H1 (cell line): ENCODE measurements at regions of chr7 and their contacts with region 1.

Region 1: DNA sequence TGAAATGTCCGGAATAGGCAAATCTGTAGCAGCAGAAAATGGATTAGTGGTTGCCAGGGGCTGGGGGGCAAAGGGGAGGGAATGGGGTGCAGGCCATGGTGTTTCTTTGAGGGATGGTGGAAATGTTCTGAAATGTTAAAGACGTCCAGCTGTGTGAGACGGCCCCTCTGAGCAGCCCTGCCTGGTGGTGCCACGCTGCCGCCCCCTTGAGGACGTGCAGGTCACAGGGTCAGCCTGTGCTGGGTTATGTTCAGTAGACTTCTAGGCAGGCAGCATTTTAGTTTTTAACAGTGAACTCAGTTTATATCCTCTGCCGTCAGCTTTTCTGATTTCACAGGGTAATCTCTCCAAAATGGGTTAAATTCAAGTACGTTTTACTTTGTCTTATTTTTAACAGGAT is 9.4 kb downstream of the NUB1 start:
- DNase-seq: peak in 1 of 2 experiments; percentile 77
- H3K4me3 ChIP-seq: no peak overlapping the region
- H3K27ac ChIP-seq: no peak overlapping the region
- H3K4me1 ChIP-seq: no peaks in the 10 kb centered on the region
- H3K27me3 ChIP-seq: no peaks in the 10 kb centered on the region
- CTCF ChIP-seq: peak; percentile 76 to 95 (median 79)
- EP300 ChIP-seq: no peak
- POLR2A ChIP-seq: no peak
- RAD21 ChIP-seq: peak; percentile 54 to 61

Region 2: GRCh38 chr7:151304856-151305255 is 46.2 kb before region 1 on chr7:
- CTCF ChIA-PET with region 1: interaction called, 51 read pairs
- POLR2A ChIA-PET with region 1: no interaction called
- DNase-seq: peak; percentile 15 to 43
- H3K4me3 ChIP-seq: peak overlapping the region; percentile 43 to 55 (median 50); a peak in 7 of 8 replicates
- H3K27ac ChIP-seq: no peak overlapping the region
- H3K4me1 ChIP-seq: peaks cover 0 to 3% (median 2%) of the 10 kb centered on the region in 4 experiments; a peak in 4 of 7 replicates
- H3K27me3 ChIP-seq: peaks cover 0 to 6% (median 2%) of the 10 kb centered on the region in 4 experiments; a peak in 4 of 7 replicates
- CTCF ChIP-seq: no peak
- EP300 ChIP-seq: no peak
- POLR2A ChIP-seq: 0 out of 3 replicates have a peak, but pooled peaks of 1 of the 2 experiments have one; percentile 36
- RAD21 ChIP-seq: no peak

Region 3: GRCh38 chr7:151320263-151320845 is 30.7 kb before region 1 on chr7:
- CTCF ChIA-PET with region 1: interaction called, 161 read pairs
- POLR2A ChIA-PET with region 1: interaction called, 8 read pairs
- DNase-seq: no peak
- H3K4me3 ChIP-seq: no peak overlapping the region
- H3K27ac ChIP-seq: no peak overlapping the region
- H3K4me1 ChIP-seq: no peaks in the 10 kb centered on the region
- H3K27me3 ChIP-seq: no peaks in the 10 kb centered on the region
- CTCF ChIP-seq: no peak
- EP300 ChIP-seq: no peak
- POLR2A ChIP-seq: no peak
- RAD21 ChIP-seq: no peak

Region 4: GRCh38 chr7:151327659-151328058 is 23.4 kb before region 1 on chr7:
- CTCF ChIA-PET with region 1: interaction called, 50 read pairs
- POLR2A ChIA-PET with region 1: no interaction called
- DNase-seq: no peak
- H3K4me3 ChIP-seq: no peak overlapping the region
- H3K27ac ChIP-seq: no peak overlapping the region
- H3K4me1 ChIP-seq: peaks cover 0 to 4% (median 1%) of the 10 kb centered on the region in 4 experiments; a peak in 4 of 7 replicates
- H3K27me3 ChIP-seq: no peaks in the 10 kb centered on the region
- CTCF ChIP-seq: no peak
- EP300 ChIP-seq: no peak
- POLR2A ChIP-seq: no peak
- RAD21 ChIP-seq: no peak

Region 5: DNA sequence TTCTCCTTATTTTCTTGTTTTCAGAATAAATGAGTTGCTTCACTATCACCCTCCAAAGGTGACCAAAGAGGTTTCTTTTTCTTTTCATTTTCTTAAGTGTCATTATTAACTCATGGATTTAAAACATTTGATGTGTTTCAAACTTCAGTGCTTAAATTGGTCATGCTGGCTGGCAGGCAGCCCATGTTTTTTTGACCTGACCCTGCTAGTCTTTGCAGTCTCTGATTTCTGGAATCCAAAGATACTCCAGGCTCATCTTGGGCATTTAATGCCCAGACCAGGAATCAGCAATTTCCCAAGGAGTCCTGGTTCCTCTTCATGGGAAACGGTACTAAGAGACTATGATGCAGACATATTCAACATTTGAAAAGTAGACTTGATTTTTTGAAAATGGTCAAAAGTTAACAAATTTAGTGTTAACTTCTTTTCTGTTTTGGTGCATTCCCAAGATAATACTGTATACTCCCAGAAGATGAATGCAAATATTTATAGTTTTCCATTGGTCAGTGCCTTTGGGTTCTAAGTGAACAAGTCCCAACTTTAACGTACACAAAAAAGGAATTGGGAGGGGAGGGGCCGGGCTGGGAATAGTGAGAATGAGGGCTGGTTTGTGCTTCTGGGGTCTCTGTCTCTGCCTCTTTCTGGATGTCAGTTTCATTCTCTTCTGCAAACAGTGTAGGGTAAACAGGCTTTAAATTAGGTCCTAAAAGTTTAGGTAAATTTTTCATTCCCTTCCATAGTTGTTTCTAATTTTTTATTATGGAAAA is 10.3 kb after region 1 on chr7:
- CTCF ChIA-PET with region 1: interaction called, 26 read pairs
- POLR2A ChIA-PET with region 1: interaction called, 3 read pairs
- DNase-seq: no peak
- H3K4me3 ChIP-seq: no peak overlapping the region
- H3K27ac ChIP-seq: no peak overlapping the region
- H3K4me1 ChIP-seq: no peaks in the 10 kb centered on the region
- H3K27me3 ChIP-seq: no peaks in the 10 kb centered on the region
- CTCF ChIP-seq: no peak
- EP300 ChIP-seq: no peak
- POLR2A ChIP-seq: no peak
- RAD21 ChIP-seq: no peak

Region 6: DNA sequence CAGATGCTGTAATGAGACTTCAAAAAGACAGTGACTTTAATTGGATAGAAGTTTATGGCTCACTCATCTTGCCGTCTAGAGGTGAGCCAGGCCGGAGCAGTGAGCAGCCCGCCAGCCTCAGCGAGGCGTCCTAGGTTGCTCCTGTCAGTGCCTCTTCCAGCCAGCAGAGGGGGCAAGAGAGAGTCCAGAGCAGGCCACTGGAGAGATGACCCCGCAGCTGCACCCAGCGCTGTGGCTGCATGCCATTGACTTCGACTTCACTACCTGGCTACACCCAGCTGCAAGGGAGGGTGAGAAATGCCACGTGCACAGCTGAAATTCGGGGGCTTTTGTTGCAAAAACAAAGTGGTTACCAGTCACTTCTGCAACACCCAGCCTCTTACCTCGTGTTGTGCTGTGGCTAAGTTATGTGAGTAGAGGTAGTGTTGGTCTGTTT is 17.1 kb after region 1 on chr7:
- CTCF ChIA-PET with region 1: interaction called, 50 read pairs
- POLR2A ChIA-PET with region 1: interaction called, 3 read pairs
- DNase-seq: peak; percentile 58 to 91
- H3K4me3 ChIP-seq: no peak overlapping the region
- H3K27ac ChIP-seq: no peak overlapping the region
- H3K4me1 ChIP-seq: peaks cover 0 to 7% (median 2%) of the 10 kb centered on the region in 4 experiments; a peak in 3 of 7 replicates
- H3K27me3 ChIP-seq: no peaks in the 10 kb centered on the region; a peak in 1 of 7 replicates
- CTCF ChIP-seq: peak; percentile 95 to 100 (median 95)
- EP300 ChIP-seq: no peak
- POLR2A ChIP-seq: no peak
- RAD21 ChIP-seq: peak; percentile 86 to 90